Natural killer cell (primary cell): ENCODE measurements at regions of chr2 and their contacts with region 1.

Region 1: DNA sequence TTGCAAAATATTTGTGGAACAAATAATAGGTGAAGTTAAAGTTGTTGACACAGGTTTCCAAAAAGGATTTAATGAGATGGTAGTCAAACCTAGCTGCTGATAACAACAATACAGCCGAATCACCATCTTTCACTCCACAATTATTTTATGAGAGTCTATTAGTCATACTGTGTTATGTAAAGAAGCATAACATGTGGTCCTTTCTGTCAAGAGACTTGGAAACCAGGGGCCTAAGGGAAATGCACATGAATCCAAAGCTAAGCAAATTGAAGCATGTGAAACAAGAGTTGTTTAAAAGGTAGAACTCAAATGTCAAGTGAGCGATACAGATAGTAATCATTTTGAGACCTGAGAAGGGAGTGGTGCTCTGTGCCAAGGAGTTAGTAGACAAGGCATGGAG is 16.0 kb downstream of the CD28 start:
- DNase-seq: peak in 1 of 2 donors; percentile 25
- ATAC-seq: no peak
- H3K4me3 ChIP-seq: no peak overlapping the region
- H3K4me3 Mint-ChIP-seq: no peak overlapping the region
- H3K27ac ChIP-seq: peak overlapping the region; percentile 14
- H3K27ac Mint-ChIP-seq: no peak overlapping the region
- H3K4me1 ChIP-seq: peaks cover 17% of the 10 kb centered on the region
- H3K4me1 Mint-ChIP-seq: peaks cover 33 to 37% of the 10 kb centered on the region in 2 donors
- H3K27me3 ChIP-seq: no peaks in the 10 kb centered on the region
- H3K27me3 Mint-ChIP-seq: peaks cover 3 to 14% of the 10 kb centered on the region in 2 donors
- CTCF ChIP-seq: no peak

Region 2: GRCh38 chr2:203688798-203689197 is 33.6 kb before region 1 on chr2:
- intact Hi-C with region 1: loop called (anchors 5 kb)
- DNase-seq: no peak
- ATAC-seq: no peak
- H3K4me3 ChIP-seq: no peak overlapping the region
- H3K4me3 Mint-ChIP-seq: no peak overlapping the region
- H3K27ac ChIP-seq: no peak overlapping the region
- H3K27ac Mint-ChIP-seq: no peak overlapping the region
- H3K4me1 ChIP-seq: peaks cover 15% of the 10 kb centered on the region
- H3K4me1 Mint-ChIP-seq: peaks cover 25 to 28% of the 10 kb centered on the region in 2 donors
- H3K27me3 ChIP-seq: peaks cover 13% of the 10 kb centered on the region
- H3K27me3 Mint-ChIP-seq: peaks cover 31 to 68% of the 10 kb centered on the region in 2 donors
- CTCF ChIP-seq: no peak

Region 3: DNA sequence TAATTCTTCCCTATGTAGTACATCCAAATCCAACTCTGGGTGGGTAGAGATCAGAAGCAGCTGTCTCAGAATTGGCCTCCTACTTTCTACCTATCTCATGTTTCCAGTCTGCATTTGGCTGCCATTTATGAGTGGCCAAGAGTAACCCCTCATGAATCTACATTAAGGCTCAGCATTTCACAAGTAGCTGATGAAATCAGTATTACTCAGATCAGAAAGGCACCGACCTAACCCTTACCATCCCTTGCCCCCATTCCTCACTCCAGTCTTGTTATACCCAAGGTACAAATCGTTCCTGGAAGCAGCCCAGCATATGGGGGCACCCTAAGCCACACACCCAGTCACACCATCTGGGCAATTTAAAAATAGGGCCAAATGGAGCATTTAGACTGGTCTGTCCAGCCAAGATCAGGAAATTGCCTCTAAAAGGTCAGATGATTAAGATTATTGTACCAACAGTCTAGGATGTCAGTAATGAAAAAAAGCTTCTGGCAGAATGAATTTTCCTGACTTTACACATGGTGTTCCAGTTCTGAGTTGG is 21.1 kb after region 1 on chr2:
- intact Hi-C with region 1: no loop called
- DNase-seq: no peak
- ATAC-seq: no peak
- H3K4me3 ChIP-seq: no peak overlapping the region
- H3K4me3 Mint-ChIP-seq: no peak overlapping the region
- H3K27ac ChIP-seq: no peak overlapping the region
- H3K27ac Mint-ChIP-seq: no peak overlapping the region
- H3K4me1 ChIP-seq: peaks cover 7% of the 10 kb centered on the region
- H3K4me1 Mint-ChIP-seq: peaks cover 13% of the 10 kb centered on the region in 2 donors
- H3K27me3 ChIP-seq: no peaks in the 10 kb centered on the region
- H3K27me3 Mint-ChIP-seq: no peaks in the 10 kb centered on the region
- CTCF ChIP-seq: no peak